ENCODE measurements at regions of chr17 and their contacts with region 1.

Region 1: DNA sequence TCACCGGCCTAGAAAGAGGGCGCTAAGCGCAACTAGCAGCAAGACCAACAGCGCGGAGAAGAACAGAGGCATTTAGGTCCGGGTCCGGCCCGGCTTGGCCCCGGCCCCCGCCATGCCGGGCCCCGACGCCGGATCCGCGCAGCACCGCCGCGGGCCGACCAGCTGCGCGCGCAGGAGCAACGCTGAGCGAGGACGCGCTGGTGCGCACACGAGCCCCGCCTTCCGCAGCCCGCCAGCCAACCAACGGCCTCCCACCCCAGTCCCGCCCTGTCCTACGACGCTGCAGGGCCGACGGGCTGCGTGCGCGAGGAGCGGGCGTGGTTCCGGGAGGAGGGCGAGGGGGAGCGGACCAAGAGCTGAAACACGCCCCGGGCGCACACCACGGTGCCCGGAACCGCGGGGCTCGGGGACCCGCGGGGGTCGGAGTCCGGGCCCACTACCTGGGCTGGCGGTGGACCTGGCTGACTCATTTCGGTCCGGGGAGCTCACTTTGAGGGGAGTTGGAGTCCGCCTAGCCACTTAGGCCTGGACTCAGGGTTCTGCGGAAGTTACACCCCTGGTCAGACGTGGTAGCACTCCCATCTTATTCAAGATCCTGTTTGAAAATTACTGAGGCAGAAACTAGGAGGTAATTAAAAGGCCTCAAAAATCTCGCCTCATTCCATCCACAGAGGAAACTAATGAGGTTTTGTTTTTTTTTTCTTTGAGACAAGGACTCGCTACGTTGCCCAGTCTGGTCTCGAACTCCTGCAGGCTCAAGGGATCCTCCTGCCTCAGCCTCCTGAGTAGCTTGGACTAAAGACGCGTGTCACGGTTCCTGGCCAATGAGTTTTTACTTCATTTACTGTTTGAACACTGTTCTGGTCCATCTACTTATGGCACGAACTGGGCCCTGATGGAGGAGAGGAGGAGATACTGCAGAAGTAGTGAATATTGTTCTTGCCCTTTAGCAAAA is at the start of gene BLTP2:
- DNase-seq: peak; percentile 91
- ATAC-seq: peak; percentile 97
- H3K4me3 Mint-ChIP-seq: peak within 1 kb of the TSS; percentile 97
- H3K27ac Mint-ChIP-seq: peak within 1 kb of the TSS; percentile 91
- H3K4me1 Mint-ChIP-seq: peaks cover 40% of the 10 kb centered on the region
- H3K27me3 Mint-ChIP-seq: no peaks in the 10 kb centered on the region
- CTCF ChIP-seq: no peak
- total RNA-seq, gene BLTP2: 162 and 182 TPM in 2 replicates

Region 2: DNA sequence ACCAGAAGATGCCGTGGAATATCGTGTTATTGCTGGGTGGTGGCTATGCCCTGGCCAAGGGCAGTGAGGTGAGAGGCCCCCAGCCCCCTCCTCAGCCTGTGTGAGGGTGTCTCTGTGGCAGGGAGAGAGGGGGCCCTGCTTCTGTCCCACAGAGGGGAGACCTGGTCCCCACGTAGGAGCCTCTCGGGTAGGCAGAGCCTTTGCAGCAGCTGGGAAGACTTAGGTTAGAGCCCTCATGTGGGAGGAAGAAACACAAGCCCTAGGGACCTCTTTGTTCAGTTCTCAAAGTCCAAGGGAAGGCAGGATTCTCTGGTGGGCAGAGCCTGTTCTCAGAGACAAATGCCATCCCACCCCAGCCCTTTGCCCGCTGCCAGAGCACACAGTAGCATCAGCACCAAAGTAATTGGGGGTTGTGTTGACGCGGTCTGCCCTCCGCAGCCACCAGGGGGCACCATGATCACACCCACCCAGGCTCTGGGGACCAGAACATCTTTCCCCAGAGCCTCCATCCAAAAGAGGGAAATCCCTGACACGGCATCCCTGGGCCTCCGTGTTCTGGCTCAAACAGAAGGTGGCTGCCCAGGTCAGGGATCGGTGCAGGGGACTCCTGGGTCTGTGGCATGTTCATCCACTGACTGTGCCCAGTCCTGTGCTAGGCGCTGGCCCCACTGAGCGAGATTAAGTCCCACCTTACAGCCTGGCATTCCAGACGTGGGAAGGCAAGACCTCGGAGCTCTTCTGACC is 150.6 kb before region 1 on chr17:
- CTCF ChIA-PET with region 1: interaction called, 6 read pairs
- POLR2A ChIA-PET with region 1: no interaction called
- intact Hi-C with region 1: loop called (anchors 1 kb)
- DNase-seq: peak; percentile 82
- ATAC-seq: peak; percentile 95
- H3K4me3 Mint-ChIP-seq: no peak overlapping the region
- H3K27ac Mint-ChIP-seq: no peak overlapping the region
- H3K4me1 Mint-ChIP-seq: peaks cover 11% of the 10 kb centered on the region
- H3K27me3 Mint-ChIP-seq: peaks cover 2% of the 10 kb centered on the region
- CTCF ChIP-seq: peak; percentile 63

Region 3: DNA sequence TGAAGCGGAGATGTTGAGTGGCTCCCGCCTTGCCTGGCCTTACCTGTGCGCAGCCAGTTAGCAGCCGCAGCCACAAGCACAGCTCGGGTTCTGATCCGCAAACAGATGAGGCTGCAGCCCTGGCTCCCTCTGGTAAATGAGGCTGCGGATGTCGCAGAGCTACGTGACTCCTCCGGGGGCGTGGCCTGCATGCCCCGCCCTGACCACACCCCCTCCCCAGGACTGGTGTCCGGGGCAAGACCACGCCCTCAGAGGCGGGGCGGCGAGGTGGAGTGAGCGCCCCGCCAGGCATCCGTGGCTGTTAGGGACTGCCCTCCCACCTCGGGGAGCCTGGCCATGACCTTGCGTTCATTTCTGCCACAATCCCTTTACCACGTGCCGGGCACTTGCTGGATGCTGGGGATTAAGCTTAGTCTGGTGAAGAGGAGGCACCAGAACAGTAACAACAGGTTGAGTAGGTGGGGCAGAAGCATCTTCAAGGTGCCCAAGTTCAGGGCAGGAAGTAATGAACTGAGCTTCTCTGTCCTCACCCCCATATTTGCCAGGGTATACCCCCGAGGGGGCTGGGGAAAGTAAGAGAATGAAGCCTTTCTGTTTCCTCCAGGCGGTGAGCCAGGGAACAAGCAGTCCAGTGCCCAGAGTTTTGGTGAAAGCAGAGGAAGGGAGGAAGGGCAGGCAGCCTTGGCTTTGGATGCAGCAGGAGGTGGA is 68.3 kb before region 1 on chr17 and contains the start of gene ALDOC:
- CTCF ChIA-PET with region 1: no interaction called
- POLR2A ChIA-PET with region 1: interaction called, 21 read pairs
- intact Hi-C with region 1: loop called (anchors 2 kb)
- DNase-seq: peak; percentile 98
- ATAC-seq: peak; percentile 99
- H3K4me3 Mint-ChIP-seq: peak within 1 kb of the TSS; percentile 79
- H3K27ac Mint-ChIP-seq: peak within 1 kb of the TSS; percentile 92
- H3K4me1 Mint-ChIP-seq: peaks cover 26% of the 10 kb centered on the region
- H3K27me3 Mint-ChIP-seq: no peaks in the 10 kb centered on the region
- CTCF ChIP-seq: no peak
- total RNA-seq, gene ALDOC: 73.4 and 75.0 TPM in 2 replicates

Region 4: GRCh38 chr17:28634206-28634856 is 10.9 kb before region 1 on chr17:
- CTCF ChIA-PET with region 1: interaction called, 4 read pairs
- POLR2A ChIA-PET with region 1: interaction called, 10 read pairs
- intact Hi-C with region 1: no loop called
- DNase-seq: no peak
- ATAC-seq: no peak
- H3K4me3 Mint-ChIP-seq: no peak overlapping the region
- H3K27ac Mint-ChIP-seq: no peak overlapping the region
- H3K4me1 Mint-ChIP-seq: no peaks in the 10 kb centered on the region
- H3K27me3 Mint-ChIP-seq: no peaks in the 10 kb centered on the region
- CTCF ChIP-seq: no peak

Region 5: GRCh38 chr17:28717578-28718333 is 72.5 kb after region 1 on chr17 and contains the start of gene RAB34:
- CTCF ChIA-PET with region 1: interaction called, 6 read pairs
- POLR2A ChIA-PET with region 1: interaction called, 23 read pairs
- intact Hi-C with region 1: loop called (anchors 1 kb)
- DNase-seq: peak; percentile 46
- ATAC-seq: peak; percentile 14
- H3K4me3 Mint-ChIP-seq: peak within 1 kb of the TSS; percentile 79
- H3K27ac Mint-ChIP-seq: peak within 1 kb of the TSS; percentile 85
- H3K4me1 Mint-ChIP-seq: peaks cover 49% of the 10 kb centered on the region
- H3K27me3 Mint-ChIP-seq: no peaks in the 10 kb centered on the region
- CTCF ChIP-seq: no peak
- total RNA-seq, gene RAB34: 21.3 and 23.9 TPM in 2 replicates

Region 6: GRCh38 chr17:29116804-29117772 is 471.8 kb after region 1 on chr17:
- CTCF ChIA-PET with region 1: interaction called, 10 read pairs
- POLR2A ChIA-PET with region 1: no interaction called
- intact Hi-C with region 1: loop called (anchors 2 kb)
- DNase-seq: peak; percentile 63
- ATAC-seq: peak; percentile 83
- H3K4me3 Mint-ChIP-seq: no peak overlapping the region
- H3K27ac Mint-ChIP-seq: no peak overlapping the region
- H3K4me1 Mint-ChIP-seq: peaks cover 7% of the 10 kb centered on the region
- H3K27me3 Mint-ChIP-seq: no peaks in the 10 kb centered on the region
- CTCF ChIP-seq: peak; percentile 29